ENCODE measurements at regions of chr20 and their contacts with region 1.

Region 1: DNA sequence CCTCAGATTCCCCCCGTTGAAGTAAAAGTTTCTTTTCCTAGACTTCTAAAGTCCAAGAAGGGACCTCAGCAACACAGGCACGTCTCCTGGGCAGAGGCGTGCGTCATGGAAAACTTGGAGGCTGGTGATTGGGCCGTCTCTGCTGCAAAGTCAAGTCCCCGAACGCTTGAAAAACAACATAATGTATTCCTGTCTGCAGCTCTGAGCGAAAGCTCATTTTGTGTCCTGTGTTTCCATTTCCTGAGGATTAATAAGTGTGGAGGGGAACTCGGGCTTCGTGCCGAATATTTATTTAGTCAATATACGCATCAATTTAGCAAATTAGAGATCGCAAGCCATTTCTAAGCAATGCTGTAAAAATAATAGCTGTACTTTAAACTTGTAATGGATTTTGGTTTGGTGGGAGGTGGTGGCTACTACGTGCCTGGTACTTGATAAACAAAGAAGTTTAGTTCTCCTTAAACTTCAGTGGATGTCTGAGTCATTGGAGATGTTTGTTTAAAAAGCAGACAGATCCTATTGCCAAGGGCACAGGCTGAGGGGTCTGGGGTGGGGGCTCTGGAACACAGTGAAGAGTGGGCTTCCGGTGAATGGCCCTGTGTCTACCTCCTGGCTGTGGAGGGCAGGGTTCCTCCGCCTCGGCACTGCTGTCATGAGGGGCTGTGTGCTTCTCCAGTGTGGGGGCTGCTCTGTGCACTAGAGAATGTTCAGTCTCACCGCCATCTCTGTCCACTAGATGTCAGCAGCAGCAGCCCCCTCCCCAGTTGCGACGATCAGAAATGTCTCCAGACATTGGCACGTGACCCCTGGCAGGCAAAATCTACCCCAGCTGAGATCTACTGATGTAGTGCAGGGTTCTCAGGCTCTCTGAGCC is 21.8 kb downstream of the PCK1 start:
- DNase-seq: peak; percentile 74
- H3K4me3 ChIP-seq: no peak overlapping the region; a peak in 1 of 4 replicates
- H3K27ac ChIP-seq: no peak overlapping the region
- H3K4me1 ChIP-seq: no peaks in the 10 kb centered on the region; a peak in 1 of 4 replicates
- H3K27me3 ChIP-seq: peaks cover 7% of the 10 kb centered on the region; the same call in 1 of the 2 replicates
- CTCF ChIP-seq: peak; percentile 45
- EP300 ChIP-seq: no peak
- RAD21 ChIP-seq: peak; percentile 44

Region 2: GRCh38 chr20:57480444-57481160 is 102.1 kb before region 1 on chr20:
- CTCF ChIA-PET with region 1: no interaction called
- POLR2A ChIA-PET with region 1: no interaction called
- DNase-seq: no peak
- H3K4me3 ChIP-seq: no peak overlapping the region
- H3K27ac ChIP-seq: no peak overlapping the region
- H3K4me1 ChIP-seq: no peaks in the 10 kb centered on the region; a peak in 1 of 4 replicates
- H3K27me3 ChIP-seq: peaks cover 6% of the 10 kb centered on the region; the same call in 1 of the 2 replicates
- CTCF ChIP-seq: no peak
- EP300 ChIP-seq: no peak
- RAD21 ChIP-seq: no peak

Region 3: GRCh38 chr20:57567471-57568079 is 15.1 kb before region 1 on chr20:
- CTCF ChIA-PET with region 1: interaction called, 18 read pairs
- POLR2A ChIA-PET with region 1: no interaction called
- DNase-seq: no peak
- H3K4me3 ChIP-seq: no peak overlapping the region
- H3K27ac ChIP-seq: no peak overlapping the region
- H3K4me1 ChIP-seq: no peaks in the 10 kb centered on the region
- H3K27me3 ChIP-seq: peaks cover 17% of the 10 kb centered on the region
- CTCF ChIP-seq: no peak
- EP300 ChIP-seq: no peak
- RAD21 ChIP-seq: no peak

Region 4: DNA sequence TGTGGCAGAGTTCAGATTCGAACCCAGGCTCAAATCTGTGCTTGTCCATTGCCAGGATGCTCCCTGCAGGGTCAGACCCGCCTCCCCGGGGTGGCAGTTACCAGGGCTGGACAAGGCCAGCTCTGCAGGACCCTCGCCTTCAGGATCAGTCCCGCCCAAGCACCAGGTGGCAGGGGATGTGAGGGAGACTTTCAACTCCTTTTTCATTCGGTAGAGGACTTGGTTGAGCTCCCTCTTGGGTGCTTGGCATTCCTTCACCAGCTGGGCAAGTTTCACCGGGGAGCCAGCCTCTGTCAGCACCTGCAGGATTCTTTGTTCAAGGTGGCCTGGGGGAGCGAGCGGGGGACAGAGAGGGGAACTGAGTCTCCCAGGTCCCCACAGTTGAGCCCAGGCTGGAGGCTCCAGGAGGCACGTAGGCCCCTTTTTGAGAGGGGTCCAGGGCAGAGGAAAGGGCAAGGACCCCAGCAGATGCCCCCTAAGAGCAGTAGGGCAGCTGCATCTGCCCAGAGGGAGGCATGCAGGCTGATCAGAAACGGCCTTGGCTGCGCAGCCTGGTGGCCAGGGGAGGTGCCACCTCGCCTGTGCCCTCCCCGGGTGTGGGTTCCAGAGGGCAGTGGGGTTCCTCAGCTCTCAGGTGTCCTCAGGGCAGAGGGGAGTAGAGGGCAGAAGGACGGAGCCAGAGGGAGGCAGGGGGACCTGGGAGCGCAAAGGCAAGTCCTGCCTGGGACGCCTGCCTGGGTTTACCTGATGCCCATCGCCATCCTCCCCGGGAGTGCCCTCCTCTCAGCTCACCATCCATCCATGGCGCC is 33.7 kb after region 1 on chr20:
- CTCF ChIA-PET with region 1: no interaction called
- POLR2A ChIA-PET with region 1: no interaction called
- DNase-seq: no peak
- H3K4me3 ChIP-seq: no peak overlapping the region
- H3K27ac ChIP-seq: no peak overlapping the region
- H3K4me1 ChIP-seq: no peaks in the 10 kb centered on the region
- H3K27me3 ChIP-seq: no peaks in the 10 kb centered on the region; the same call in 1 of the 2 replicates
- CTCF ChIP-seq: no peak
- EP300 ChIP-seq: no peak
- RAD21 ChIP-seq: no peak